HCT116 (cell line): ENCODE measurements at regions of chr5 and their contacts with region 1.

Region 1: DNA sequence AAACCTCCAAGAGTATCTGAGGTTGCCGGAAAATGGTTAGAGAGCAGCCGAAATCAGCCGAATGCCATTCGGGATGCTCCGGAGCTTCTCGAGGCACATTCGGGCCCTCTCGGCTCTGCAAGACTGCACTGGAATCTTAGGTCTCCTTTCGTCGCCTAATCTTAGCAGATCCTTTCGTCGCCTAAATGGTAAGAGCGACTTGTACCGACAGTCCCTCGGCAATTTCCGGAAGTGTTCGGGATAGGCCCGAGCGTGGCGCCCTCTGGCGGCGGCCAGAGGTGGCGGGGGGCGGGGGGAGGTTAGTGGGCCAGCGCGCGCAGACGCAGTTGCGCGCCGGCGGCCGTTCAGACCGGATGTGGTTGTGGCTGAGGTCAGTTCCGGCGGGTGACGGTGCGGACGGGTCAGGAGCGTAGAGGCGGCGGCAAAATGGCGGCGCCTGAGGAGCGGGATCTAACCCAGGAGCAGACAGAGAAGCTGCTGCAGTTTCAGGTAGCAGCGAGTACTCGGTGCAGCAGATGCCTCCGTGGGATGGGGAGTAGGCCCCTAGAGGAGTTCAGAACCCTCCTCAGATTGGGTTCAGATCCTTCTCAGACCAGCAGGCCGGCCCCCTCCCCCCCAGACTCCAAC is at the start of gene FAF2:
- DNase-seq: peak; percentile 97
- ATAC-seq: peak; percentile 94
- H3K4me3 ChIP-seq: peak within 1 kb of the TSS; percentile 96
- H3K27ac ChIP-seq: peak within 1 kb of the TSS; percentile 80
- H3K4me1 ChIP-seq: peaks cover 4 to 21% of the 10 kb centered on the region in 2 experiments; a peak in 3 of 4 replicates
- H3K27me3 ChIP-seq: no peaks in the 10 kb centered on the region
- CTCF ChIP-seq: peak; percentile 88 to 98 (median 95)
- POLR2A ChIP-seq: peak; percentile 56
- RAD21 ChIP-seq: peak; percentile 53
- total RNA-seq, gene FAF2: 51.9 TPM

Region 2: DNA sequence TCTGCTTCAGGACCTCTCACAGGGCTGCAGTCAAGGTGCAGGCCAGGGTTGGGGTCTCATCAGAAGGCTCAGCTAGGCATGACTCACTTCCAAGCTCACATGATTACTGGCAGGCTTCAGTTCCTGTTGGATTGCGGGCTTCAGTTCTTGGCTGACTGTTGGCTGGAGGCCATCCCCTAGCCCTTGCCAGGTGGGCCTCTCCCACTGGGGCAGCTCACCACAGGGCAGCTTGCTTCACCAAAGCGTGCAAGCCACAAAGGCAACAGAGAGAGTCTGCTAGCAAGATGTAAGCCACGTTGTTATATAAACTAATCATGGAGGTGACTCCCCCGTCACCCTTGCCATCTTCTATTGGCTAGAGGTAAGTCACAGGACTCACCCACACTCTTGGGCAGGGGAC is 562.3 kb before region 1 on chr5:
- CTCF ChIA-PET with region 1: no interaction called
- POLR2A ChIA-PET with region 1: no interaction called
- RAD21 ChIA-PET with region 1: no interaction called
- intact Hi-C with region 1: no loop called
- DNase-seq: no peak
- ATAC-seq: no peak
- H3K4me3 ChIP-seq: no peak overlapping the region
- H3K27ac ChIP-seq: no peak overlapping the region
- H3K4me1 ChIP-seq: peaks cover 13 to 23% of the 10 kb centered on the region in 2 experiments
- H3K27me3 ChIP-seq: no peaks in the 10 kb centered on the region
- CTCF ChIP-seq: no peak
- POLR2A ChIP-seq: no peak
- RAD21 ChIP-seq: no peak

Region 3: GRCh38 chr5:176537608-176538504 is 89.8 kb after region 1 on chr5:
- CTCF ChIA-PET with region 1: interaction called, 5 read pairs
- POLR2A ChIA-PET with region 1: interaction called, 3 read pairs
- RAD21 ChIA-PET with region 1: no interaction called
- intact Hi-C with region 1: loop called (anchors 5 kb)
- DNase-seq: peak; percentile 99
- ATAC-seq: peak; percentile 80
- H3K4me3 ChIP-seq: peak overlapping the region; percentile 79 to 99
- H3K27ac ChIP-seq: peak overlapping the region; percentile 89
- H3K4me1 ChIP-seq: peaks cover 27 to 47% of the 10 kb centered on the region in 2 experiments
- H3K27me3 ChIP-seq: no peaks in the 10 kb centered on the region
- CTCF ChIP-seq: no peak
- POLR2A ChIP-seq: peak; percentile 27
- RAD21 ChIP-seq: no peak